A549 (cell line): ENCODE measurements at regions of chr19 and their contacts with region 1.

Region 1: GRCh38 chr19:42132851-42133528 is 744 bp upstream of the POU2F2 start:
- DNase-seq: peak; percentile 61 to 95
- ATAC-seq: peak; percentile 74 to 90
- H3K4me3 ChIP-seq: peak overlapping the region; percentile 35
- H3K27ac ChIP-seq: peak overlapping the region; percentile 15 to 53; a peak in 4 of 6 replicates
- H3K4me1 ChIP-seq: peaks cover 9% of the 10 kb centered on the region; the same call in 2 of the 3 replicates
- CTCF ChIP-seq: peak; percentile 100
- EP300 ChIP-seq: no peak
- POLR2A ChIP-seq: no peak
- RAD21 ChIP-seq: peak; percentile 99 to 100

Region 2: GRCh38 chr19:42003506-42004294 is 129.3 kb before region 1 on chr19:
- CTCF ChIA-PET with region 1: no interaction called
- POLR2A ChIA-PET with region 1: no interaction called
- DNase-seq: no peak
- ATAC-seq: peak; percentile 11 to 41; a peak in 4 of 6 replicates
- H3K4me3 ChIP-seq: no peak overlapping the region
- H3K27ac ChIP-seq: no peak overlapping the region
- H3K4me1 ChIP-seq: peaks cover 5% of the 10 kb centered on the region
- CTCF ChIP-seq: no peak
- EP300 ChIP-seq: no peak
- POLR2A ChIP-seq: no peak
- RAD21 ChIP-seq: no peak

Region 3: GRCh38 chr19:42154471-42155323 is 21.7 kb after region 1 on chr19:
- CTCF ChIA-PET with region 1: interaction called, 678 read pairs
- POLR2A ChIA-PET with region 1: no interaction called
- DNase-seq: no peak
- ATAC-seq: peak; percentile 28 to 57; a peak in 3 of 6 replicates
- H3K4me3 ChIP-seq: no peak overlapping the region
- H3K27ac ChIP-seq: no peak overlapping the region
- H3K4me1 ChIP-seq: no peaks in the 10 kb centered on the region
- CTCF ChIP-seq: no peak
- EP300 ChIP-seq: no peak
- POLR2A ChIP-seq: no peak
- RAD21 ChIP-seq: no peak

Region 4: GRCh38 chr19:42176990-42177685 is 44.1 kb after region 1 on chr19:
- CTCF ChIA-PET with region 1: interaction called, 323 read pairs
- POLR2A ChIA-PET with region 1: interaction called, 4 read pairs
- DNase-seq: peak; percentile 90
- ATAC-seq: peak; percentile 84 to 95
- H3K4me3 ChIP-seq: peak overlapping the region; percentile 56
- H3K27ac ChIP-seq: peak overlapping the region in 1 of 2 experiments; percentile 52; a peak in 2 of 6 replicates
- H3K4me1 ChIP-seq: peaks cover 16% of the 10 kb centered on the region
- CTCF ChIP-seq: peak; percentile 73
- EP300 ChIP-seq: no peak
- POLR2A ChIP-seq: no peak
- RAD21 ChIP-seq: peak in 1 of 2 experiments; percentile 39; a peak in 2 of 5 replicates

Region 5: DNA sequence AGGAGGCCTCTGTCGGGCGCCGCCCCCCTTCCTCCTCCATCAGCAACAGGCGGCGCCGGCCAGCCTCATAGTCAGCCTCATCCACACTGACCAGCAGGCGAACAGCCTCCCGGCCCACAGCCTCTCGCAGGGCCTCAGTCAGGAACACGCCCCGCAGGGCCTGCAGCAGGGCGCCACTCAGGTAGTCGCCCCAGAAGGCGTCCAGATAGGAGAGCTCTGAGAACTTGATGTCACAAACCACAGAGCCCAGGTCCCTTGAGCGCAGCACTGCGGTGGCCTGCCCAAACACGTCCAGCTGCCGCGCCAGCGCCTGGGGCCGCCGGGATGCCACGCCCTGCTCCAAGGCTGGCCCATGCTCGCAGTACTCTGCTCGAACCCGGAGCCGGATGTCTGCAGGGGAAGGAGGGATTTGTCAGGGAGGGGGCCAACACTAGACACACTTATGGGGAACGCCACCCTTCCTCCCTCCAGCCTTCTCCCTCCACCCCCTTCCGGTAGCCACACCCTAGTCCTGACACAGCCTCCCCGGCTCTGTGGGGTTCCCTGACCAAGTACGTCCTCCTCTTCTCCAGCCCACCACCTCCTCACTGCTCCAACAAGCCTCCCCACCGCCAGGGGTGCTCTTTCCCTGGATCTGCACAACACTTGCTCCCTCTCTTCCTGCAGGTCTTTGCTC is 66.6 kb after region 1 on chr19:
- CTCF ChIA-PET with region 1: interaction called, 41 read pairs
- POLR2A ChIA-PET with region 1: no interaction called
- DNase-seq: no peak
- ATAC-seq: peak in 1 of 2 experiments; percentile 35; a peak in 3 of 6 replicates
- H3K4me3 ChIP-seq: no peak overlapping the region
- H3K27ac ChIP-seq: peak overlapping the region in 1 of 2 experiments; percentile 9; a peak in 1 of 6 replicates
- H3K4me1 ChIP-seq: no peaks in the 10 kb centered on the region
- CTCF ChIP-seq: no peak
- EP300 ChIP-seq: no peak
- POLR2A ChIP-seq: no peak
- RAD21 ChIP-seq: no peak

Region 6: GRCh38 chr19:42219812-42220750 is 87.1 kb after region 1 on chr19 and contains the start of gene ZNF526:
- CTCF ChIA-PET with region 1: interaction called, 23 read pairs
- POLR2A ChIA-PET with region 1: interaction called, 3 read pairs
- DNase-seq: peak; percentile 100
- ATAC-seq: peak; percentile 81 to 92
- H3K4me3 ChIP-seq: peak within 1 kb of the TSS; percentile 77
- H3K27ac ChIP-seq: peak within 1 kb of the TSS; percentile 85 to 89
- H3K4me1 ChIP-seq: peaks cover 39% of the 10 kb centered on the region
- CTCF ChIP-seq: no peak
- EP300 ChIP-seq: no peak
- POLR2A ChIP-seq: peak; percentile 87
- RAD21 ChIP-seq: no peak
- polyA plus RNA-seq, gene ZNF526: 7.1 and 8.7 TPM in 2 replicates

Region 7: DNA sequence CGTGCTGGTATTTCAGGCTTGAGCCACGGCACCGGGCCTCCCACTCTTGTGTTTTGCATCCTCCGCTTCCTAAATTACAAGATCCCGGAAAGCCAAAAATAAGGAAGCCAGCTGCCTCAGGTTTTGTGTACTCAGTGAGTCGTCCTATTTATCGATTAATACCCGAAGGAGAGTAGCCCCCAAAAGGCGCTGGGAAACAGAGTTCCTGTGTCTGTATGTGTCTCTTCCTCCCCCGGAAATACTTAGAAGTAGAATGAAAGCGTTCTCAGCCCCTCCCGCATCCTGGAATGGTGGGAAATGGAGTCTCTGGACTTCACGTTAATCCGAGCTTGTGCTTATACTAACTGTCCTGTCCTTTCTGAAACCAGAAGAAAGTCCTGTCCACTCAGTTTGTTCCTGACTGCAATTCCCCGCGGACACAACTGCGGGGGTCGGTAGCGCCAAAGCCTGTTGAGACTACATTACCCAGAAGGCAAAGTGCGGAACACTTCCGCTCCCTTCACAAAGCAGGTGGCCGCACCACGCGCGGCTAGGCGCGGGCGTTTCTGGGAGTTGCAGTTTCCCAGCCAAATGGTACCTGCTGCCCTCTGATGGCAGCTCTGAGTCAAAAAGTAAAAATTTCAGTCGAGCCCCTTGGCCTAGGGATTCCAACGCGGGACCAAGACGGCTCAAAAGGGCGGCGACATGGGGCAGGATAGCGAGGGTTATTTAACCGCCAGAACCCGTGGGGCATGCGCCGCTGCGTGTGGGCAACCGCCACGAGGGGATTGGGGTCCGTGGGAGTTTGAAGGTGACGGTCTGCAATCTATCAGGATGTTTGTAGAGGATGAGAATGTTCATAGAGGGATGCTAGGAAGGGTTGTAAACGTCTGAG is 111.6 kb after region 1 on chr19:
- CTCF ChIA-PET with region 1: interaction called, 118 read pairs
- POLR2A ChIA-PET with region 1: interaction called, 3 read pairs
- DNase-seq: peak; percentile 99
- ATAC-seq: peak; percentile 44 to 64
- H3K4me3 ChIP-seq: peak overlapping the region; percentile 65
- H3K27ac ChIP-seq: peak overlapping the region; percentile 87 to 90
- H3K4me1 ChIP-seq: peaks cover 60% of the 10 kb centered on the region
- CTCF ChIP-seq: peak; percentile 86
- EP300 ChIP-seq: no peak; a peak in 1 of 5 replicates
- POLR2A ChIP-seq: peak; percentile 18; the same call in 1 of the 2 replicates
- RAD21 ChIP-seq: peak; percentile 54 to 64

Region 8: GRCh38 chr19:42295831-42296525 is 163.0 kb after region 1 on chr19:
- CTCF ChIA-PET with region 1: interaction called, 16 read pairs
- POLR2A ChIA-PET with region 1: no interaction called
- DNase-seq: peak; percentile 86 to 93
- ATAC-seq: peak; percentile 72 to 84
- H3K4me3 ChIP-seq: no peak overlapping the region
- H3K27ac ChIP-seq: no peak overlapping the region
- H3K4me1 ChIP-seq: peaks cover 6% of the 10 kb centered on the region
- CTCF ChIP-seq: peak; percentile 98
- EP300 ChIP-seq: no peak
- POLR2A ChIP-seq: no peak
- RAD21 ChIP-seq: peak; percentile 83 to 88